Calu3 (cell line): ENCODE measurements at regions of chr6 and their contacts with region 1.

Region 1: GRCh38 chr6:122620879-122621278 is 10.7 kb downstream of the PKIB start:
- DNase-seq: no peak
- H3K4me3 Mint-ChIP-seq: no peak overlapping the region
- H3K27ac Mint-ChIP-seq: peak overlapping the region; percentile 24
- H3K4me1 Mint-ChIP-seq: peaks cover 31% of the 10 kb centered on the region
- H3K27me3 Mint-ChIP-seq: no peaks in the 10 kb centered on the region
- CTCF ChIP-seq: no peak

Region 2: GRCh38 chr6:122568797-122569661 is 51.9 kb before region 1 on chr6:
- CTCF ChIA-PET with region 1: no interaction called
- intact Hi-C with region 1: no loop called
- DNase-seq: no peak
- H3K4me3 Mint-ChIP-seq: no peak overlapping the region
- H3K27ac Mint-ChIP-seq: no peak overlapping the region
- H3K4me1 Mint-ChIP-seq: peaks cover 8% of the 10 kb centered on the region
- H3K27me3 Mint-ChIP-seq: no peaks in the 10 kb centered on the region
- CTCF ChIP-seq: no peak

Region 3: GRCh38 chr6:122609856-122610689 is 10.8 kb before region 1 on chr6 and contains the start of gene PKIB:
- CTCF ChIA-PET with region 1: interaction called, 4 read pairs
- intact Hi-C with region 1: loop called (anchors 1 kb)
- DNase-seq: peak; percentile 87
- H3K4me3 Mint-ChIP-seq: peak within 1 kb of the TSS; percentile 88
- H3K27ac Mint-ChIP-seq: peak within 1 kb of the TSS; percentile 39
- H3K4me1 Mint-ChIP-seq: no peaks in the 10 kb centered on the region
- H3K27me3 Mint-ChIP-seq: no peaks in the 10 kb centered on the region
- CTCF ChIP-seq: peak; percentile 21
- total RNA-seq, gene PKIB: 11.8 and 17.2 TPM in 2 replicates

Region 4: DNA sequence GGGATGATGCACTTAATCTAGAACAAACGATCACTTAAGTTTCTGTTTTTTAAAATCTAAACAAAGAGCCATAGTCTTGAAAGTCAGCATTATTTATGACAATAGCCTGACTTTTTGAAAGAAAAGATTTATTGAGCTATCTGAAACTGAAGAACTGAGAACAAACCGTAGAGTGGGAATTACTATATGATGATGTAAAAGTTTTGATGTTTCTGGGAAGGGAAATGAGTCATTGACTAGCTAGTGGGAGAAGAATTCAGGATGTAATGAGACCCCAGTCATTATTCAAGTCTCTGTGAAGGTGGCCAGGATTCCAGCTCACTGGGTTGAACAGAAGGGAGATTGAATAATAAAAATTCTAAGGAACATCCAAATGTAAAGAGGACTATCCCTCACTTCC is 75.2 kb after region 1 on chr6:
- CTCF ChIA-PET with region 1: no interaction called
- intact Hi-C with region 1: loop called (anchors 1 kb)
- DNase-seq: no peak
- H3K4me3 Mint-ChIP-seq: peak overlapping the region; percentile 13
- H3K27ac Mint-ChIP-seq: peak overlapping the region; percentile 74
- H3K4me1 Mint-ChIP-seq: peaks cover 48% of the 10 kb centered on the region
- H3K27me3 Mint-ChIP-seq: no peaks in the 10 kb centered on the region
- CTCF ChIP-seq: no peak

Region 5: DNA sequence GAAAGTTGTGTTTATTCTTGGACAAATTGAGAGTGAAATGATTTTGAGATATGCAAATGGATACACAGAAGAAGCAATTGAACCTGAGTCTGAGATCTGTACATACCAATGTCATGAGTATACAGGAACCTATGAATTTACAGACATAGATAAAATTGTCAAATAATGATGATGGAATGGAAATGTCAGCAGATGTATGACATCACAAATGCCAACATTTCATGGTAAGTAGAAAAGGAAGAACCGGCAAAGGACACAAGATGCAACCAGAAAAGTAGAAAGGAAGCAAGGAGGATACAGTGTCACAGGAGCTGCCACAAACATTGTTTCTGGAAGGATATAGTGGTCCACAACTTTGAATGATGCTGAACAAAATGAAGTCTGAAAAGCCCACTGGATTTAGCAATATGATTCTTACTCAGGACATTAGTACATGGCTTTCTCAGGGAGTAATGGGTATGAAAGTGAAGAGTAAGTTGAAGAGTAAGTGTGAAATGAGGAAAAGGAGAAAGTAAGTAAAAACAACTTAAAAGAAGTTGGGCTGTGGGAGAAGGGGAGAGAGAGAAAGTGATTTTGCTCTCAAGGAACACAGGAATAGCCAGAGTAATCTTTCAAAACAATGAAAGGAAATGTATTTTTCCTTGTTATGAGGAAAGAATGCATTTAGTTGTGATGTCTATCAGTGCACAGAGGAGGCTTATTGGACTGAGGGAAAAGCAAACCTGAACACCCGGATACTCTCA is 1142.9 kb after region 1 on chr6:
- CTCF ChIA-PET with region 1: no interaction called
- intact Hi-C with region 1: no loop called
- DNase-seq: no peak
- H3K4me3 Mint-ChIP-seq: no peak overlapping the region
- H3K27ac Mint-ChIP-seq: no peak overlapping the region
- H3K4me1 Mint-ChIP-seq: no peaks in the 10 kb centered on the region
- H3K27me3 Mint-ChIP-seq: no peaks in the 10 kb centered on the region
- CTCF ChIP-seq: no peak